ENCODE measurements at regions of chr22 and their contacts with region 1.

Region 1: GRCh38 chr22:22959147-22959827 is 71.7 kb downstream of the IGLL5 start:
- DNase-seq: peak; percentile 36
- H3K4me3 ChIP-seq: no peak overlapping the region
- H3K27ac ChIP-seq: no peak overlapping the region
- H3K27me3 ChIP-seq: peaks cover 8% of the 10 kb centered on the region
- CTCF ChIP-seq: peak; percentile 90

Region 2: DNA sequence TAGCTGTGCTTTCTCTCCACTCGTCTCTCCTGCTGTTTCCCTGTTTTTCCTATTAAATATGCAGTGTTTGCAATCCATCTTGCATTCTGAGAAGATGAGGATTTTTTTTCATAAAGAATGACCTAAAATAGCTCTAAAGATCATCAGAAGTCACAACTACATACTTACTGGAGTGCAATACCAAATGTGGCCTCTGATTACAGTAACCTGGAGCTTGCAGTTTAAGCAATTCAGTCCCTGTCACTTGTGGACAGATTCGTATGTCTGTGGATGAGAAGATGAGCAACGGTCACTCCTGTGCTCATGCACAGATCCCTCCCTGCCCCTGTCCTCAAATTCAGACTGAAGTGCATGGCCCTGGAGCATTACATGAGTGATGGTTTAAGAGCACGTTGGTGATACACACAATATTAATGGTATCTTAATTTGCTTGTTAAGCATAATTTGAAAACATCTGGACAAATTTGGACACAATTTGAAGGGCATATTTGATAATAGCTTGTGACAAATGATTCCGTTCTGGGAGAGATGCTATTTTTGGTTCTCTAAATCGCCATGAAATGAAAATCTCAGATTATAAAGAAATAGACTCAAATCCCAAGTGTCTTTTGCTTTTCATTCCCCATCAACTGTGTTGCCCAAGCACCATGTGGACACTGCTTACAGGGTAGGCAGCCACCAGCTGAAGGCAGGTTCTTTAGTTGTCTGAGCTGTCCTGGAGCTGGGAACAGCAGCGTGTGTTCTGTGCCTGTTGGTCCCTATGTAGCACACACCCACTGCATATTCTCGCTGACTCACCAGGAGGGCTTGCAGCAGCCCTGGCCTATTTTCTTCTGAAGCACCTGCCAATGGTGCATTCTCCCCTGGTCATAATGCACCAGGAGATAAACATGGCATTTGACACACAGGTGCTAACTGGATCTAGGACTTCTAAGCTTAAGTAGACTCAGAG is 367.7 kb before region 1 on chr22:
- CTCF ChIA-PET with region 1: interaction called, 10 read pairs
- POLR2A ChIA-PET with region 1: no interaction called
- DNase-seq: no peak
- H3K4me3 ChIP-seq: no peak overlapping the region
- H3K27ac ChIP-seq: no peak overlapping the region
- H3K27me3 ChIP-seq: peaks cover 5% of the 10 kb centered on the region
- CTCF ChIP-seq: no peak

Region 3: DNA sequence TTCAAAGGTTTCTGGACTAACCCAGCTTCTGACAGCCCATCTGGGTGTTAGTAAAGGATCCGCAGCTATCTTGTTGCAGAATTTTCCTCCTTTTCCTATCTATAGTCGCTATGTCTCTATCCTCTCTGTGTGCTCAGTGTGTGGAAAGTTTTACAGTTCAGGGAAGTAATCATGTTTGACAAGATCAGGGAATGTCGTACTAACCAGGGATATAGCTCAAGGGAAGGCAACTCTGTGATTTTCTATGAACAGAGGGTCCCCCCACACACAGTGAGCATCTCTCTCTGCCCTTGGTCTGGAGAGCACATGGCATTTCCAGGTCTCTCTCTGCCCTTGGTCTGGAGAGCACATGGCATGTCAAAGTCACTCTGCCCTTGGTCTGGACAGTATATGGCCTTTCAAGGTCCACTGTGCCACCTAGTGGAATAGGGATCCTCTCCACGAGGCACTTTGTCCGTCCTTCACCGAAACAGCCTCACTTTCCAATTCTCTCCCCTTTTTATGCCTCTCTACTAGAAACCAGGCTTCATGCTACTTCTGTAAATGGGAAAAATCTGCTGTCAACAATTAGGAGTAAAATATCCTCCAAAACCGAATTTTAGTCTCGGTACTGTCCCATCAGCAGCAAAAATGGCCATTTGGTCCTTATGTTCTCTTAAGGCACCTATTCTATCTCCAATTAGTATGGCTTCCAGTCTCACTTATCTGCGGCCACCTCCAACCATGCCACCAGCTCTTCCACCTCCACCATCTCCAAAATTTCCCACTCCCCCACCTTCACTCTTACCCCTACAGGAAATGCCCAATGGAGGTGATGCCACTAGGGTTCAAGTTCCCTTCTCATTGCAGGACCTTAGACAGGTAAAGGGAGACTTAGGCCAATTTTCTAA is 17.0 kb after region 1 on chr22:
- CTCF ChIA-PET with region 1: interaction called, 13 read pairs
- POLR2A ChIA-PET with region 1: no interaction called
- DNase-seq: no peak
- H3K4me3 ChIP-seq: no peak overlapping the region
- H3K27ac ChIP-seq: no peak overlapping the region
- H3K27me3 ChIP-seq: no peaks in the 10 kb centered on the region
- CTCF ChIP-seq: no peak

Region 4: GRCh38 chr22:23128269-23129108 is 169.2 kb after region 1 on chr22:
- CTCF ChIA-PET with region 1: interaction called, 304 read pairs
- POLR2A ChIA-PET with region 1: no interaction called
- DNase-seq: peak; percentile 66
- H3K4me3 ChIP-seq: no peak overlapping the region
- H3K27ac ChIP-seq: no peak overlapping the region
- H3K27me3 ChIP-seq: peaks cover 5% of the 10 kb centered on the region
- CTCF ChIP-seq: peak; percentile 82

Region 5: GRCh38 chr22:23144932-23145873 is 185.9 kb after region 1 on chr22 and contains the start of gene RAB36:
- CTCF ChIA-PET with region 1: interaction called, 12 read pairs
- POLR2A ChIA-PET with region 1: no interaction called
- DNase-seq: peak; percentile 97
- H3K4me3 ChIP-seq: peak within 1 kb of the TSS; percentile 70
- H3K27ac ChIP-seq: peak within 1 kb of the TSS; percentile 52
- H3K27me3 ChIP-seq: no peaks in the 10 kb centered on the region
- CTCF ChIP-seq: no peak
- polyA plus RNA-seq, gene RAB36: 2.6 and 3.5 TPM in 2 replicates

Measured in AG04450 (cell line).